ENCODE measurements at regions of chr18 and their contacts with region 1.

Region 1: DNA sequence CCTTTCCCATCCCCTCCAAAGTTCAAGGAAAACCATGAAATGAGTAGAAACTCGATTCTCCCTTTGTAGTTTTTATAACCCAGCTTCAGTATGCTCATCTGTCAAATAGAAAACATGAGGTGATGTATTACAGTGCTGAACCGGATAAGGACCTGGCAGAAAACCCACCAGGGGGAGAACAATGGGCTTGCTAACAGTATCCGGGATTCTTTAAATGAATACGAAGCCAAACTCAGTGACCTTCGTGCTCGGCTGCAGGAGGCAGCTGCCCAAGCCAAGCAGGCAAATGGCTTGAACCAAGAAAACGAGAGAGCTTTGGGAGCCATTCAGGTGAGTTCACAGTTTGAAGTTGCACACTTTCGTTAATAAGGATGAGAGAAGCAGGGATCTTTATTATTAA is 113.6 kb upstream of the TTC39C start:
- DNase-seq: peak; percentile 94
- H3K4me3 ChIP-seq: no peak overlapping the region
- H3K27ac ChIP-seq: peak overlapping the region; percentile 52
- H3K4me1 ChIP-seq: peaks cover 11% of the 10 kb centered on the region
- H3K27me3 ChIP-seq: no peaks in the 10 kb centered on the region
- CTCF ChIP-seq: no peak
- POLR2A ChIP-seq: no peak

Region 2: DNA sequence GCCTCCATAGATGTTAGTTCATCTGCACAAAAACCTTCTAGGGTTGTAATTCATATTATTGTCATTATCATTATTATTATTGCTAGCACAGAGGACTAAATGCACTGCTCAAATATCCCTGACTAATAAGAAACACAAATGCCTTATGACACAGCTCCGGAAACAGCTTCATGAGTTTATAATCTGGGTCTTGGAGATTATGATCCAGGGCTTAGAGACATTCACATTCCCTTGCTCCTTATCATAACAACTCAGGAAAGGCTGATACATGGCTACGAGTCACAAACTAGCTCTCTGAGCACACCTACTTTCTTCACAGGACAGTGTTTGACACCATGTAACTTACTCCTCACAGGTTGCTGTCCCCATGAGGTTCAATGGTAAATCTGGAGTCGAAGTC is 11.4 kb after region 1 on chr18:
- CTCF ChIA-PET with region 1: interaction called, 13 read pairs
- POLR2A ChIA-PET with region 1: interaction called, 8 read pairs
- dilution Hi-C with region 1: no loop called
- intact Hi-C with region 1: no loop called
- DNase-seq: peak; percentile 83
- H3K4me3 ChIP-seq: no peak overlapping the region
- H3K27ac ChIP-seq: peak overlapping the region; percentile 25
- H3K4me1 ChIP-seq: peaks cover 7% of the 10 kb centered on the region
- H3K27me3 ChIP-seq: no peaks in the 10 kb centered on the region
- CTCF ChIP-seq: no peak
- POLR2A ChIP-seq: peak; percentile 41